Right ventricle myocardium inferior (tissue), 1 donor: ENCODE measurements at regions of chr2 and their contacts with region 1.

Region 1: DNA sequence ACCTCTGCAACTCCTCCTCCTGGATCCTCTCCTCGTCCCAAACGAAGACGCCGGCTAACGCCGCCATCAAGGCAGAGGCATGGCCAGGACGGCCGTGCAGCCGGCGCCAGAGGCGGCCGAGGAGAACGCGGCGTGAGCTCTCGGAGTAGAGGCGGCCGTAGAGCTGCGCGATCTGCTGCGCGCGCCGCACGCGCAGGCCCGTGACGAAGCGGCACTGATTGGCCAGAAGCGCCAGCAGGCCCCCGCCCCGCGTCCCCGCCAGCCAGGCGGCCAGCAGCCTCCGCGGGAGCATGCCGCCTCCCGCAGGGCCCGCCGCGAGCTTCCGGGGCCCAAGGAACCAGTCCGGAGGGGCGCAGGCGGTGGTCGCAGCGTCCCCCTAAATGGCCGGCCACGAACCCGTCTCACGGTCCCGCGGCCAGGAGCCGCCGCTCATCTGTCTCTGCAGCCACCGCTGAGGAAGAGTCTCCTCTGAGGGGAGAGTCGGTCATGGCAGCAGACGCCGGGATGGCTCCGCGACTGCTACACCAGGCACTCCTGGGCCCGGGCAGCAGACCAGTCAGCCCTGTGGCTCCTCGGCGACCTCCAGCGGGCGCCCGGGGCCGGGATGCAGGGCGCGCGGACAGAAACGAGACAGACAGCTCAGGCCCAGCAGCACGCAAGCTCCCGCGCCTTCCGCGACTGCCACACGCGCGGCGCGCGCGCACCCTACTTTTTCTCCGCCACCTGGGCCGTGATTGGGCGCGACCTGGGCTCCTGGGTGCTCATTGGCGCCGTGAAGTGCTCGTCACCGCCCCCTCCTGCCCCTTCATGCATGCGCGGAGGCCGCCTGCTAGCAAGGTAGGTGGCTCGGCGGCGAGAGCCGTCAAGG is at the start of gene STARD7:
- DNase-seq: peak; percentile 99
- ATAC-seq: peak; percentile 97
- total RNA-seq, gene STARD7: 194 TPM

Region 2: GRCh38 chr2:96186562-96186961 is 21.8 kb before region 1 on chr2:
- intact Hi-C with region 1: loop called (anchors 2 kb)
- DNase-seq: no peak
- ATAC-seq: peak; percentile 50

Region 3: DNA sequence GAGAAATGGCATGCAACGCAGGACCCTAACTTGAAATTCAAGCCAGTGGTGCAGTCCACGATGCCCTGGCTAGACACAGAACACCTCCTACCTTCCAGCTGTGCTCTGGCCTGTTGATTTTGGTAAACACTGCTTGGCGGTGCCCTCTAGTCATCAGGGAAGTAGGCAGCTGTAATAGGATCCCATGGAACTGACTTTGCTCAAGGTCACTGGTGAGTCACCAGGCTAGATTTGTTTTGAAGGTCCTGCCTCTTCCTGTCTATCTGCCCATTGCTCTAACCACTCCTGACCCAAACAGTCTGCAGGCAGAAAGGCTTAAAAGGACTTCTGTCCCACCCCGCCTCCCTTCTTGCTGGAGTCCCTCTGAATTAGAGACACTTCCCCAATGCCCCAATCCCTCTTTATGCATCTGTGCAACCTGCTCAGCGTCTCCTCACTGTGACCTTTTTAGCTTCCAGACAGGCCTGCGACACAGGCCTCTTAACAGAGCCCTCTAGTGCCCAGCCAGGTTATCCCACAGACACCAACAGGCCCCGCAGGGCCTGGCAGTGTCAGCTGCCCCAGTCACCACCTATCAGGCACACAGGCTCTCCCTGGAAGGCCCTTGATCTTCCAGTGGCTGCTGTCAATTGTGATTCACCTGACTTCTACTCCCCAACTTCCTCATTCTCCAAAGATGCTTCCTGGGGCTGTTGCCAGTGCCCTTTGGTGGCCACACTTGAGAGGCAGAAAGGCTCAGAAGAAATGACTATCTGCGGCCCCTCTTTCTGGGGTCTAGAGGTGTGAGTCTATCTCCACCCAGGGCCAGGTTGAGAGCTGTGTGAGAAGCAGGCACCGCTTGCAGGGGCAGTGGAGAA is 52.3 kb after region 1 on chr2:
- intact Hi-C with region 1: loop called (anchors 2 kb)
- DNase-seq: peak; percentile 78
- ATAC-seq: peak; percentile 76

Region 4: GRCh38 chr2:96320728-96321622 is 112.6 kb after region 1 on chr2:
- intact Hi-C with region 1: no loop called
- DNase-seq: no peak
- ATAC-seq: peak; percentile 45